ENCODE measurements at regions of chr4 and their contacts with region 1.

Region 1: GRCh38 chr4:80365928-80366327 is 30.4 kb downstream of the CFAP299 start:
- DNase-seq: peak; percentile 36
- ATAC-seq: peak; percentile 75

Region 2: DNA sequence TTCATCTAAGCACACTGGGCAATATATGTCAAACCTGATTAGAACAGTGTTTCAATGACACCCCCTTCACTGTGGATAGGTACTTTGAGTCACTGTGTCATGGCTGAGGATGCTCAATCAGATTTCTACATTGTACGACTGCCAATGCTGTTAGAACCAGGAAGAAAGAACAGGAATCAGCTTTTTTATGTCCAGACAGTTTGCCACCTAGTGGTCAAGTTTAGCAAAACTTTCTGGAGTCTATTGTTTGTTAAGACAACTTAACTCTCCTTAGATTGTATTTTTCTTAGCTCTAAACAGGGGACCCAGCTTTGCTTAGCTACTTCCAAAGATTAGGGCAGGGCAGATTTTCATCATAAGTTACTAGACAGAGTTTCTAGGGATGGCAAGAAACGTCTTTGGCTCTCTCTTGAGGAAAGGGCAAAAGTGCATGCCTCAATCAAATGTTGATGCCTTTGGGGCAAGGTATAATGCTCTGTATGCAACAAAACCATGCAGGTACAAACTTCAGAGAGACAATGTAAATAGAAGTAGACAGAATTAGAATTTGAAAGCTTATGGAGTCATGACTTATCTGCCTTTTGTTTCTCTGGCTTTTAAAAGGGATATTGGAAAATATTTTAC is 624.1 kb after region 1 on chr4:
- intact Hi-C with region 1: loop called (anchors 5 kb)
- DNase-seq: no peak
- ATAC-seq: no peak

Region 3: DNA sequence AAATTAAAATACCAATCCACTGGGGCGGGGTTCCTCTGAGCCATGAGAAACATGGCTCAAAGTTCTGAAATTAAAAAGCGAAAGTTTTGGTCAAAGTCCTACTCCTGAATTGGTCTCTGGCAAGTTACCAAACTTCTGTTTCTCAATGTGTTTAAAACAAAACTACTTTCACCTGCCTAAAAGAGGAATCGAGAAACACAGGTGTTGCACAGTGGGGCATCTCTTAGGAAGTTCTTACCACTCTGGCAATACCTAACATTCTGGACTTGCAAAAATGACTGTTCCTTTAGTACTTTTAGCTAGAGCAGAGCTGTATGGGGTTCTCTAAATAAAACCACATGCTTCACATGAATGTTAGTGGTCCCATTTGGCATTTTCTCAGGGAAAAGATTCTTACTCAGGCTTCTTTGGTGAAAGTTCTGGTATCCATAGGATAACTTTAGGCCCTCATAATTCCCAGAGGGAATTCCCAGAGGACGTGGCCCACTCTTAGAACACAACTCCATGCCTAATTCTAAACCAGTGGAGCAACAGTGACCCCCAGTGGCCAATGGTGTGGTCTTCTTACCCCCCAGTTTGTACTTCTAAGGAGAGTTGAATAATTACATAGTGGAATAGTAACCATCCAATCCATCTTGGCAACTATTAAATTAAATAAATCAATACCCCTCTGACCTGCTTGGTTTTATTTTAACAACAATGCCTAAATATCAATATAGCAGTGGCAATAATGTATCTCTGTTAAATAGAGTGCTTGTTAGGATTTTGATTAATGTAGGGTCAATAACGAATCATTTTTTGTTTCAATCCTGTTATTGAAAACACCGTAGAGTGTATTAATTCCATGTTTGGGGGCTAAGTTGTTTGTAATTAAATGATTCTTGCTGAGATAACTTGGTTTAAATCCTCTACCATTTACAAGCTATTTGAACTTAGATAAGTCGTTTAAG is 686.5 kb after region 1 on chr4:
- intact Hi-C with region 1: loop called (anchors 5 kb)
- DNase-seq: peak; percentile 40
- ATAC-seq: peak; percentile 81

Measured in Right ventricle myocardium superior (tissue), 1 donor.